ENCODE measurements at regions of chr2 and their contacts with region 1.

Region 1: DNA sequence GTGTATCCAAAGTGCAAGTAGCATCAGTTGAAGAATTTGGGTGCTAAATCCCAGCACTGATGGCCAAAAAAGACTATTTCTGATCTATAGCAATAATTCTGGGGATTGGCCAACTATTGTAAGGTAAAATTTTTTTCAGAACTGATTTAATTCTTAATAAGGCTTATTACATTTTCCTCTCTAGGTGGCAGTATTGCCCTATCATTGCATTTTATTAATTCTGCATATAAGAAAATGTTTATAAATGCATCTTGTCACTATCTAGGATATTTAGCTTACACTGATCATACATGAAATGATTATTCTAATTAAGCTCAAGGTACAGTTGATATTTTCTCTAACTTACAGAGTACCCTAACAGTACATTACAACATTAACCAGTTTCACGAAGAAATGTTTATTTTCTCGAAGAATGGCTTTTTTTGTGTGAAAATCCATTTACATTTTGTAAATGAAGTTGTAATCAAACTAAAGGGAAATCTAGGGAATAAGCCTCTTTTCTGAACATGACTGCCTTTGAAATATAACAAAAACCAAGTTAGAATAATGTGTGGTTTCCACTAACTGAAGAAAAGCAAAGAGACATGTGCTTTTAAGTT is 11.0 kb downstream of the TTN start:
- DNase-seq: no peak
- H3K4me3 ChIP-seq: no peak overlapping the region
- H3K27ac ChIP-seq: no peak overlapping the region
- H3K4me1 ChIP-seq: no peaks in the 10 kb centered on the region
- H3K27me3 ChIP-seq: no peaks in the 10 kb centered on the region
- CTCF ChIP-seq: peak in 4 of 6 experiments; percentile 13 to 56 (median 52)
- POLR2A ChIP-seq: no peak

Region 2: GRCh38 chr2:178914259-178914849 is 118.2 kb after region 1 on chr2:
- intact Hi-C with region 1: loop called (anchors 5 kb)
- DNase-seq: peak; percentile 73 to 82
- H3K4me3 ChIP-seq: no peak overlapping the region
- H3K27ac ChIP-seq: no peak overlapping the region
- H3K4me1 ChIP-seq: no peaks in the 10 kb centered on the region
- H3K27me3 ChIP-seq: no peaks in the 10 kb centered on the region
- CTCF ChIP-seq: peak; percentile 47 to 83 (median 58)
- POLR2A ChIP-seq: no peak